ENCODE measurements at regions of chr16 and their contacts with region 1.

Region 1: DNA sequence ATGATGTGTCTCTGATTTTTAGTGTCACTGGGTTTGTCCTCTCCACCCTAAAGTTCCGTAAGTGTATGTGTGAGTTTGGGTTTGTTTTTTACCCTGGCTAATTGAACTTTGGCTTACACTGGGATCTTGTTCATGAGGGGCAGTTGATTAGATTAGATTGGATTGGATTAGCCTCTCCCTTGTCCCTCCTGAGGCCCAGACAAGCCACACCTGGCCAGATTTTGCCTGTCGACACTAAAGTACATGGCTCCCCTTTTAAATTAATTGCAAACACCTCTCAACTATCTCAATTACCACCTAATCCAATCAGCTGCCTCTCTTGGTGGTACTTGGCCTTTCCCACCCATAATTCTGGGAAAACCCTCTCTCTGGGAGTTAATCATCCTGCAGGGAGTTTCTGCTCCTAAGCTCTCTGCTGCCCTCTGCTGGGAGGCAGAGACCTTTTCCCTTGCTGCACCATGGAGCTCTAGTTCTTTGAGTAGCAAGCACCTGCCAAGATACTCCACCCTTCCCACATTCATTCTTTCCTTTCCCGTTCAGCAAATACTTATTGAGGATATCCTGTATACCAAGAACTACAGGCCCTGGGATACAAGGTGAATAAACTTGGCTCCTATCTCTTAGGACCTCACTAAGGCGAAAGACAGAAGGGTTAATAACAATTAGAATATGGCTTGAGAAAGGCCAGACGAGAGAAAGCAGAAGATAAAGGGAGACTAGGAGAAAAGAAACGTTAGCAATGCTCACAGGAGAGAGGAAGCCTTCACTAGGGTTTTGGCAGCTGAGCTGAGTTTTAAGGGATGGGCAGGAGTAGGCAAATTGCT is 60.0 kb upstream of the MPHOSPH6 start:
- DNase-seq: peak; percentile 44 to 63
- ATAC-seq: peak in 5 of 8 donors; percentile 33 to 69 (median 57)
- H3K4me3 ChIP-seq: no peak overlapping the region
- H3K27ac ChIP-seq: no peak overlapping the region
- H3K4me1 ChIP-seq: no peaks in the 10 kb centered on the region
- H3K27me3 ChIP-seq: peaks cover 0 to 13% (median 0%) of the 10 kb centered on the region in 7 donors
- CTCF ChIP-seq: peak; percentile 55 to 93 (median 87)

Region 2: GRCh38 chr16:81885976-81886586 is 343.9 kb before region 1 on chr16:
- intact Hi-C with region 1: loop called in 8 of 10 experiments (anchors 2 to 10 kb)
- DNase-seq: no peak
- ATAC-seq: peak in 3 of 8 donors; percentile 25 to 64 (median 48)
- H3K4me3 ChIP-seq: no peak overlapping the region
- H3K27ac ChIP-seq: no peak overlapping the region
- H3K4me1 ChIP-seq: no peaks in the 10 kb centered on the region
- H3K27me3 ChIP-seq: peaks cover 0 to 3% (median 0%) of the 10 kb centered on the region in 7 donors
- CTCF ChIP-seq: peak in 8 of 9 donors; percentile 20 to 74 (median 59)

Region 3: GRCh38 chr16:81891736-81892357 is 338.2 kb before region 1 on chr16:
- intact Hi-C with region 1: loop called in 9 of 10 experiments (anchors 2 to 10 kb)
- DNase-seq: no peak
- ATAC-seq: no peak
- H3K4me3 ChIP-seq: no peak overlapping the region
- H3K27ac ChIP-seq: no peak overlapping the region
- H3K4me1 ChIP-seq: no peaks in the 10 kb centered on the region
- H3K27me3 ChIP-seq: no peaks in the 10 kb centered on the region
- CTCF ChIP-seq: no peak

Region 4: GRCh38 chr16:81896900-81897299 is 333.1 kb before region 1 on chr16:
- intact Hi-C with region 1: loop called in 4 of 10 experiments (anchors 2 to 10 kb)
- DNase-seq: no peak
- ATAC-seq: no peak
- H3K4me3 ChIP-seq: no peak overlapping the region
- H3K27ac ChIP-seq: no peak overlapping the region
- H3K4me1 ChIP-seq: peaks cover 0 to 10% (median 0%) of the 10 kb centered on the region in 9 donors
- H3K27me3 ChIP-seq: no peaks in the 10 kb centered on the region
- CTCF ChIP-seq: no peak

Region 5: GRCh38 chr16:81940781-81941560 is 289.0 kb before region 1 on chr16:
- intact Hi-C with region 1: loop called (anchors 1 to 10 kb)
- DNase-seq: no peak
- ATAC-seq: peak in 1 of 8 donors; percentile 52
- H3K4me3 ChIP-seq: no peak overlapping the region
- H3K27ac ChIP-seq: no peak overlapping the region
- H3K4me1 ChIP-seq: peaks cover 0 to 7% (median 0%) of the 10 kb centered on the region in 9 donors
- H3K27me3 ChIP-seq: peaks cover 0 to 5% (median 0%) of the 10 kb centered on the region in 7 donors
- CTCF ChIP-seq: peak; percentile 9 to 67 (median 55)

Region 6: GRCh38 chr16:82031116-82032084 is 198.6 kb before region 1 on chr16:
- intact Hi-C with region 1: loop called in 9 of 10 experiments (anchors 2 to 10 kb)
- DNase-seq: no peak
- ATAC-seq: no peak
- H3K4me3 ChIP-seq: no peak overlapping the region
- H3K27ac ChIP-seq: no peak overlapping the region
- H3K4me1 ChIP-seq: no peaks in the 10 kb centered on the region
- H3K27me3 ChIP-seq: peaks cover 0 to 14% (median 5%) of the 10 kb centered on the region in 7 donors
- CTCF ChIP-seq: peak in 7 of 9 donors; percentile 25 to 53 (median 46)

Region 7: DNA sequence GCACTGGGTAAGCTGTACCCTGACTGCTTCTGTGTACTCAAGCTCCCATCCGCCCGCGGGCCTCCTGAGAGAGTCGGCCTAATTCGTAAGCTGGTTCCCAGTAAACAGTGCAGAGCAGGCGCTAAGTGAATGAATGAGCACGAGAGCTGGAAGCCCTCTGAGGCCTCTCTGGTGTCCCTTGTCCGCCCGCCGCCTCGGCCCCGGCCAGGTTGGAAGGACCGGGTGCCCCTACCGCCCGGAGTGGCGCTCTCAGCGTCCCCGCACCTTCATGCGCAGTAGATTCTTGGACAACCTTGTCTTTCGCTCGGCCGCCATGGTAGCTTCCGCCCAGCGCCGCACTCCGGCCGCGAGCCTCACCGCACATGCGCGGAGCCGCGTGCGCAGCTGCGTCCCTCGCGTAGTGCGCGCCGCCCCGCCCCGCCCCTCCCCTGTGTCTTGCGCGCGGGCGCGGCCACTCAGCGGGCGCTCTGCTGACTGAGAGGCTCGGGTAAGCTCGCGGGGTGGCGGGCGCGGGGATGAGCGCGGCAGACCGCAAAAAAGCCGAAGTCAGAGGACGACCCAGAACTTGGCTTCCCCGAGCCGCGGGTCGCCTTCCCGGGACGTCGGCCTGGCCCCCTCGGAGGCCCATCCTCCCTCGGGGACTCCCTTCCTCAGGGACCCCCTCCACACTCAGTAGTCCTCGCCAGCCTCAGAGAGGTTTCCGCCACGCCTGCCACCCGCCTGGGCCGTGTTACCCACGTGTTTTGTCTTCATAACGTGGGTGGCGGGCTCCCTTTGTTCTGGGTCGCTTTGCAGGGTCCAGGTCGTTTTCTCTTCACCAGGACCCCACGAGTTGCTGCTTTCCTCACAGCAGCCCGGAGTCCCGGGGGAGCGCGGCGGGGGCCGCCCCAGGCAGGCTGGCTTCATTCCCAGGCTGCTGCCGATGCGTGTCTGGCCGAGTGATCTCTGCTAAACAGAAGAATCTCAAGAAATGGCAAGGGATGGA is 59.9 kb before region 1 on chr16 and contains the start of gene MPHOSPH6:
- intact Hi-C with region 1: no loop called
- DNase-seq: peak; percentile 89 to 93
- ATAC-seq: peak; percentile 98 to 100 (median 99)
- H3K4me3 ChIP-seq: peak within 1 kb of the TSS; percentile 62 to 87 (median 77)
- H3K27ac ChIP-seq: peak within 1 kb of the TSS in 9 of 10 donors; percentile 74 to 91 (median 80)
- H3K4me1 ChIP-seq: peaks cover 0 to 21% (median 15%) of the 10 kb centered on the region in 9 donors
- H3K27me3 ChIP-seq: peaks cover 0 to 31% (median 14%) of the 10 kb centered on the region in 7 donors
- CTCF ChIP-seq: peak in 4 of 9 donors; percentile 10 to 34 (median 11)
- total RNA-seq, gene MPHOSPH6: 7.0 to 12.2 (median 10.7) TPM